Activated B cell treated with CpG ODN at 0.5 μM for 24 hours (primary cell): ENCODE measurements at regions of chr11 and their contacts with region 1.

Region 1: GRCh38 chr11:117197516-117198456 is 1.4 kb upstream of the TAGLN start:
- DNase-seq: no peak
- ATAC-seq: no peak
- H3K4me3 Mint-ChIP-seq: no peak overlapping the region
- H3K27ac Mint-ChIP-seq: peak overlapping the region; percentile 50
- H3K4me1 Mint-ChIP-seq: peaks cover 39% of the 10 kb centered on the region
- H3K27me3 Mint-ChIP-seq: no peaks in the 10 kb centered on the region
- CTCF ChIP-seq: no peak

Region 2: GRCh38 chr11:117212697-117213355 is 15.0 kb after region 1 on chr11:
- CTCF ChIA-PET with region 1: no interaction called
- POLR2A ChIA-PET with region 1: interaction called, 11 read pairs
- intact Hi-C with region 1: no loop called
- DNase-seq: no peak
- ATAC-seq: no peak
- H3K4me3 Mint-ChIP-seq: no peak overlapping the region
- H3K27ac Mint-ChIP-seq: no peak overlapping the region
- H3K4me1 Mint-ChIP-seq: no peaks in the 10 kb centered on the region
- H3K27me3 Mint-ChIP-seq: no peaks in the 10 kb centered on the region
- CTCF ChIP-seq: no peak

Region 3: GRCh38 chr11:117281159-117281558 is 83.4 kb after region 1 on chr11:
- CTCF ChIA-PET with region 1: no interaction called
- POLR2A ChIA-PET with region 1: no interaction called
- intact Hi-C with region 1: no loop called
- DNase-seq: no peak
- ATAC-seq: no peak
- H3K4me3 Mint-ChIP-seq: no peak overlapping the region
- H3K27ac Mint-ChIP-seq: no peak overlapping the region
- H3K4me1 Mint-ChIP-seq: no peaks in the 10 kb centered on the region
- H3K27me3 Mint-ChIP-seq: no peaks in the 10 kb centered on the region
- CTCF ChIP-seq: no peak